ENCODE measurements at regions of chr6 and their contacts with region 1.

Region 1: DNA sequence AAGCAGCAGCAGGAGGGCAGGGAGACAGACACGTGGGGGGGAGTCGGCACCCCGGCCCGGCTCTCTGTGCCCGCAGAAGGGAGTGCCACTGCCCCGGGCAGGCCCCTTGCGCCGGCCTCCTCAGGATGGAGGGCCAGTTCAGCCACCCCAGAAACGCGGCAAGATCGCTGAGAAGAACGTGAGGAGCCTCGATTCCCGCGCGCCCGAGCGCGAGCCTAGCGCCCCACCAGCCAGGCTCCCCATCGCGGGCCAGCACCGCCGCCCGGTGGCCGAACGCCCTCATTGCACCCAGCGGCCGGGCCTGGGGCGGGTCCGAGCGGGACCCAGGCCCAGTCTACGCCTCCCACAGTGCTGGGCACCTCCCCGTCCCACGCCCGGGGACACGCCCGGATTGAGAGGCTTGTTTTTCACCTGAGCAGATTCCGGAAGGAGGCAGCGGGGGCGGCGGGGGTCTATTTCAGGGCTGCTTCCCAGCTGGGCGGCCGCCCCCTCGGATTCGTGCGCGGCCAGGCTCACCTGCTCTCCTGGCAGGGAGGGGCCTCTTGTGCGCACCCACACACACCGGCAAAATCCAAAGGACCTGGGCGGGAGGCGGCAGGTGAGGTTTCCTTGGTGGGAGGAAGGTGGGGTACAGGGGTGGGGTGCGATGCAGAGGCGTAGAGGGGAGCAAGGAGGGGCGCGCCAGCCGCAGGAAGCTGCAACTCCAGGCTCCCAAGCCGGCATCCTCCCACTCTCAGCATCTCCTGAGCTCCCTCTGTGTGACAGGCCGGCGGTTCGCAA is 9.0 kb upstream of the GRM4 start:
- DNase-seq: peak; percentile 45 to 80 (median 63)
- ATAC-seq: peak; percentile 97
- H3K4me3 ChIP-seq: peak overlapping the region; percentile 25
- H3K4me3 Mint-ChIP-seq: no peak overlapping the region
- H3K27ac ChIP-seq: no peak overlapping the region
- H3K27ac Mint-ChIP-seq: no peak overlapping the region
- H3K4me1 ChIP-seq: peaks cover 13% of the 10 kb centered on the region
- H3K4me1 Mint-ChIP-seq: no peaks in the 10 kb centered on the region
- H3K27me3 ChIP-seq: peaks cover 21 to 37% of the 10 kb centered on the region in 2 experiments
- H3K27me3 Mint-ChIP-seq: peaks cover 38% of the 10 kb centered on the region
- CTCF ChIP-seq: peak; percentile 92

Region 2: DNA sequence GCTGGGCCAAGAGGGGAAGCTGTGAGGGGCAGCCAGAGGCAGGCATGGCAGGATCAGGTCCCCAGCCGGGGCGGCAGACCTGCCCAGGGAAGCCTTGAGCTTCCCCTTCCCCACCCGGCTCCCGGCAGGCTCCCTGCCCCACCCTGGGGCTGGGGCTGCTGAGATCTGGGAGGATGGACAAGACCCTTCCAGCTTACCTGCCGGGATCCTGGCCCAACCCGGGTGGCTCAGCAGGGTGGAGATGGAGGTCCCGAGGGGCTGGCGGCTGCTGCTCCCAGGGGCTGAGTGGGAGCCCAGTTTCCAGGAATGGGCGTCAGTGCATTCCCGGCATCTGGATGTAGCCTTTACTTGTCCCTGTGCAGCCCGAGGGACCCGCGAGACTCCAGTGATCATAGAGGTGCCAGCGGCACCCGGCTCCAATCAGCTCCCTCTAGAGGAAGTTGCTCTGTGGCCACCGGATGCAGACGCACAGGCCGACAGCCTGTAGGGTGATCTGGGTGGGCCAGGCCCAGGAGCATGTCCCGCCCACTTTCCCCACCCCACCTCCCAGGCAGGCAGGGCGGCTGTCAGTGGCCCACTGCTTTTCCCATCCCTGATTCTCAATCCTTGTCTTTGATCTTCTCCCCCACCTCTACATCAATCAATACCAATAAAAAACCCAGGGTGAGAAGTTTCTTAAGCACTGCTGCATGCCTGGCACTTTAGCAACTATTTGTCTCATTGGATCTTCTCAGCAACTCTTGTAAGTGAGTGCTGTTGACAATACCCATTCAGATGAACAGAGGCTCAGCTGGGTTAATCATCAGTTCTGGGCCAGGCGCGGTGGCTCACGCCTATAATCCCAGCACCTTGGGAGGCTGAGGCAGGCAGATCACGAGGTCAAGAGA is 574.8 kb before region 1 on chr6 and contains the start of gene BAK1:
- CTCF ChIA-PET with region 1: no interaction called
- POLR2A ChIA-PET with region 1: no interaction called
- intact Hi-C with region 1: loop called (anchors 5 to 10 kb)
- DNase-seq: peak; percentile 64 to 92 (median 78)
- ATAC-seq: peak; percentile 93
- H3K4me3 ChIP-seq: peak within 1 kb of the TSS; percentile 99
- H3K4me3 Mint-ChIP-seq: peak within 1 kb of the TSS; percentile 96
- H3K27ac ChIP-seq: peak within 1 kb of the TSS; percentile 82 to 88
- H3K27ac Mint-ChIP-seq: peak within 1 kb of the TSS; percentile 97
- H3K4me1 ChIP-seq: peaks cover 51% of the 10 kb centered on the region
- H3K4me1 Mint-ChIP-seq: peaks cover 44% of the 10 kb centered on the region
- H3K27me3 ChIP-seq: no peaks in the 10 kb centered on the region
- H3K27me3 Mint-ChIP-seq: no peaks in the 10 kb centered on the region
- CTCF ChIP-seq: peak; percentile 63
- total RNA-seq, gene BAK1: 38.3 to 40.8 TPM

Region 3: GRCh38 chr6:33744001-33744848 is 410.6 kb before region 1 on chr6:
- CTCF ChIA-PET with region 1: no interaction called
- POLR2A ChIA-PET with region 1: no interaction called
- intact Hi-C with region 1: loop called (anchors 1 kb)
- DNase-seq: peak; percentile 51 to 85 (median 65)
- ATAC-seq: peak; percentile 94
- H3K4me3 ChIP-seq: no peak overlapping the region
- H3K4me3 Mint-ChIP-seq: no peak overlapping the region
- H3K27ac ChIP-seq: no peak overlapping the region
- H3K27ac Mint-ChIP-seq: no peak overlapping the region
- H3K4me1 ChIP-seq: peaks cover 5% of the 10 kb centered on the region
- H3K4me1 Mint-ChIP-seq: peaks cover 5% of the 10 kb centered on the region
- H3K27me3 ChIP-seq: peaks cover 4% of the 10 kb centered on the region in 2 experiments
- H3K27me3 Mint-ChIP-seq: peaks cover 12% of the 10 kb centered on the region
- CTCF ChIP-seq: peak; percentile 86

Region 4: DNA sequence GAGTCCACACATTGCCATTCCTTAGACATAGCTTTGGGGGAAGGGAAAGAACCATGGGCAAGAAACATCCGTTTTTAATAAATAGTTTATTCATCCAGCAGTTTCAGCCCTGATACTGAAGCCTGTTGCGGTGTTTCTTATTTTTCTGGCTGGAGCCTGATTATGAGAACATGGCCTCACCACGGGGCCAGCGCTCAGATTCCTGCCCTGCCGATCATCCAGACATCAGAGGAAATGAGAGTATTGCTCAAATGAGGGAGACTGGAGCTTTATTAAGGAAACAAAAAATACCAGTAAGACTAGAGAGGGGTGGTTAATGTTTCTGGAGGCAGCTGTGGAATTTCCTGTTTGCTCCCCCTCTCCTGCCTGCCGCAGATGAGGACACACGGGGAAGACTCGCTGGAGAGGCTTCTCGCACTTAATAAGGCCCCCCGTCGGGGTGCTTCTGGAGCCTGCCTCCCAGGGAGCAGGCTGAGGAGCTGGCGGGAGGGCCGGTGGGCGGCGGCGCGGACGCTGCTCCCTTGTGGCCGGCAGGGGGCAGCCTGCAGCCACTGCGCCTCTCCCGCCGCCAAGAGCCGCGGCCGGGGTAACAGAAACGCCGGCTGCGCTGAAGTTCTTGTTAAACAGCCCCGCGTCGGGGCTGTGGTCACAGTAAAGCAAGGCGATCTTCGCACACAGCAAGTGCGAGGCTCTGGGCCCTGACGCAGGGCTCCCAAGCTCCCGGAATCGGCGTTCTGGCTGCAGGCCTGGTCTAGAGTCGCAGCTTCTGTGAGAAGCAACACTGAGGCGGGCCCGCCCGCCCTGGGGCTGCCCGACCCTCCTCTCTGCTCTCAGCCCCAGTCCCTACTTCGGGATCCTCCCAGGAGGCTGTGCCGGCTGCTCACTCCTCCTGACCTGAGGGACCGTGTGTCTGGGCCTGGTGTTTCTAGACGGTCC is 383.4 kb before region 1 on chr6:
- CTCF ChIA-PET with region 1: interaction called, 16 read pairs
- POLR2A ChIA-PET with region 1: no interaction called
- intact Hi-C with region 1: loop called (anchors 1 kb)
- DNase-seq: peak; percentile 36 to 85 (median 57)
- ATAC-seq: peak; percentile 80
- H3K4me3 ChIP-seq: no peak overlapping the region
- H3K4me3 Mint-ChIP-seq: no peak overlapping the region
- H3K27ac ChIP-seq: no peak overlapping the region
- H3K27ac Mint-ChIP-seq: peak overlapping the region; percentile 61
- H3K4me1 ChIP-seq: peaks cover 21% of the 10 kb centered on the region
- H3K4me1 Mint-ChIP-seq: peaks cover 17% of the 10 kb centered on the region
- H3K27me3 ChIP-seq: peaks cover 0 to 3% of the 10 kb centered on the region in 2 experiments
- H3K27me3 Mint-ChIP-seq: no peaks in the 10 kb centered on the region
- CTCF ChIP-seq: peak; percentile 94

Region 5: GRCh38 chr6:33851959-33852358 is 302.9 kb before region 1 on chr6:
- CTCF ChIA-PET with region 1: no interaction called
- POLR2A ChIA-PET with region 1: no interaction called
- intact Hi-C with region 1: loop called in 1 of 2 experiments (anchors 10 kb)
- DNase-seq: peak in 7 of 14 experiments; percentile 7 to 60 (median 31)
- ATAC-seq: no peak
- H3K4me3 ChIP-seq: no peak overlapping the region
- H3K4me3 Mint-ChIP-seq: no peak overlapping the region
- H3K27ac ChIP-seq: no peak overlapping the region
- H3K27ac Mint-ChIP-seq: no peak overlapping the region
- H3K4me1 ChIP-seq: peaks cover 27% of the 10 kb centered on the region
- H3K4me1 Mint-ChIP-seq: peaks cover 15% of the 10 kb centered on the region
- H3K27me3 ChIP-seq: peaks cover 5 to 8% of the 10 kb centered on the region in 2 experiments
- H3K27me3 Mint-ChIP-seq: peaks cover 4% of the 10 kb centered on the region
- CTCF ChIP-seq: peak; percentile 25

Region 6: DNA sequence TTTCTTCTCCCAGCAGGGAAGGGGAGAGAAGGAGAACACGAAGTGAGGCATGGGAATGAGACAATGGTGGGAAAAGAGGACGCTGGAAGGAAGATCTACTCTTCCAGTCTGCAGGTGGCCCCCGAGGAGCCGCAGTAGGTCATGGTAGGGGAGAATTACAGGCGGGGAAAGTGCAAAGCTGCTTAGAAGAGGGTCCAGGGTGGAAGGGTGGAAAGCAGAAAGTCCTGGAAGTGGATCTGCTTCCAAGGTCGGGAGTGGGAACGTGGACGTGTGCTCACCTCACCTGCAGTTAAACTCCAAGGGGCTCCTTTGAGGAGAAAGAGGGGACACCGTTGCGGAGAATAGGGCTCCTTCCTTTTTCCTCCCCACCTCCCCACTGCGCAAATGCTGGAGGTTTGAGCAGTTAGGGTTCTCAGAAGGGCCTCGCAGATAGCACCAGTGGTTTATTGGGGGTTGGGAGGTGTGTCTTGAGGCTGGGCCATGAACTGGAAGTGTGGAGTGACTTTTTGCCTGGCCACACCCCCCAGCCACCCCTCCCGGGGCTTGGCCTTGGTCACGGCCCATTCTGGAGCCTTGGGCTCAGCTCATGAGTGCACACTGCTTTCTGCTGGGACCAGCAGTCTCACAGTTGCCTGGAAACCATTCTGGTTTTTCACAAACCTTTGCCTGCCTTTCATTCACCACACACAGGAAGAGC is 250.7 kb before region 1 on chr6:
- CTCF ChIA-PET with region 1: no interaction called
- POLR2A ChIA-PET with region 1: no interaction called
- intact Hi-C with region 1: no loop called
- DNase-seq: peak; percentile 40 to 89 (median 62)
- ATAC-seq: peak; percentile 82
- H3K4me3 ChIP-seq: peak overlapping the region; percentile 19
- H3K4me3 Mint-ChIP-seq: peak overlapping the region; percentile 43
- H3K27ac ChIP-seq: peak overlapping the region; percentile 62 to 72
- H3K27ac Mint-ChIP-seq: peak overlapping the region; percentile 85
- H3K4me1 ChIP-seq: peaks cover 70% of the 10 kb centered on the region
- H3K4me1 Mint-ChIP-seq: peaks cover 81% of the 10 kb centered on the region
- H3K27me3 ChIP-seq: no peaks in the 10 kb centered on the region
- H3K27me3 Mint-ChIP-seq: no peaks in the 10 kb centered on the region
- CTCF ChIP-seq: no peak

Region 7: DNA sequence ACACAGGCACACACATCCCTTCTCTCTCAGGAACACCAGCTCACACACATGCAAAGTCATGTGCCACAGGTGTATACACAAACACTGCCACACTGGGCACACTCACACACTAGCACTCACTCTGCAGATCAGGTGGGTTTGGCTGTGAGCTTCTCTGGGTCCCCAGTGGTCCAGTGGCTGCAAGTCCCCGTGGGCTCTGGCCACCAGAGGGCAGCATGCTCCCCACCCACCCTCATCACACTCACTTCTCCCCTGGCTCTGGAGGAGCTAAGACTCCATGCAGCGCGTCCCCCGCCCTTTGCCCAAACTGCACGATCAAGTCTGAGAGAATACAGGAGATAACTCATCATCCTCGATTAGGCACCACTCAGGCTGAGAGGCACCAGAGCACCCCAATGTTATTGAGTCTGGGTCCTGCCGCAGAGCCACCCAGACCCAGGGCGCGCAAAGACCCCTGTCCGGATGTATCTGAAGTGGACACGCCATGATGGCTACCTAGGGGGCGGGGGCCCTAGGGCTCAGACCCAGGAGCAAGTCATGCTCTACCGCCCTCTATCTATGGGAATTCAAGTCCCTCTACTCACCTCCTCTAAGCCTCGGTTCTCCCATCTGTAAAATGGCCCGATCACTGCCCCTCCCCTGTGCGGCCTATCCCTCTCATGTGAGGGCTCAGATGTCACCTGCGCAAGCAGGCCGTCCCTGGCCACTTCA is 99.5 kb before region 1 on chr6:
- CTCF ChIA-PET with region 1: interaction called, 4 read pairs
- POLR2A ChIA-PET with region 1: no interaction called
- intact Hi-C with region 1: loop called (anchors 1 kb)
- DNase-seq: peak; percentile 42 to 78 (median 52)
- ATAC-seq: peak; percentile 76
- H3K4me3 ChIP-seq: no peak overlapping the region
- H3K4me3 Mint-ChIP-seq: no peak overlapping the region
- H3K27ac ChIP-seq: no peak overlapping the region
- H3K27ac Mint-ChIP-seq: no peak overlapping the region
- H3K4me1 ChIP-seq: no peaks in the 10 kb centered on the region
- H3K4me1 Mint-ChIP-seq: no peaks in the 10 kb centered on the region
- H3K27me3 ChIP-seq: no peaks in the 10 kb centered on the region
- H3K27me3 Mint-ChIP-seq: peaks cover 5% of the 10 kb centered on the region
- CTCF ChIP-seq: peak; percentile 76